ENCODE measurements at regions of chr2 and their contacts with region 1.

Region 1: GRCh38 chr2:72993147-72993932 is 76.0 kb downstream of the EMX1 start:
- DNase-seq: no peak
- ATAC-seq: peak in 1 of 2 donors; percentile 42
- H3K4me3 ChIP-seq: no peak overlapping the region
- H3K27ac ChIP-seq: no peak overlapping the region
- H3K4me1 ChIP-seq: no peaks in the 10 kb centered on the region
- H3K27me3 ChIP-seq: no peaks in the 10 kb centered on the region

Region 2: GRCh38 chr2:72951303-72952095 is 41.8 kb before region 1 on chr2:
- intact Hi-C with region 1: no loop called
- DNase-seq: no peak
- ATAC-seq: no peak
- H3K4me3 ChIP-seq: no peak overlapping the region
- H3K27ac ChIP-seq: no peak overlapping the region
- H3K4me1 ChIP-seq: no peaks in the 10 kb centered on the region
- H3K27me3 ChIP-seq: no peaks in the 10 kb centered on the region

Region 3: GRCh38 chr2:73103018-73103542 is 109.7 kb after region 1 on chr2:
- intact Hi-C with region 1: no loop called
- DNase-seq: peak in 1 of 3 donors; percentile 14
- ATAC-seq: no peak
- H3K4me3 ChIP-seq: no peak overlapping the region
- H3K27ac ChIP-seq: no peak overlapping the region
- H3K4me1 ChIP-seq: peaks cover 15% of the 10 kb centered on the region
- H3K27me3 ChIP-seq: no peaks in the 10 kb centered on the region

Region 4: DNA sequence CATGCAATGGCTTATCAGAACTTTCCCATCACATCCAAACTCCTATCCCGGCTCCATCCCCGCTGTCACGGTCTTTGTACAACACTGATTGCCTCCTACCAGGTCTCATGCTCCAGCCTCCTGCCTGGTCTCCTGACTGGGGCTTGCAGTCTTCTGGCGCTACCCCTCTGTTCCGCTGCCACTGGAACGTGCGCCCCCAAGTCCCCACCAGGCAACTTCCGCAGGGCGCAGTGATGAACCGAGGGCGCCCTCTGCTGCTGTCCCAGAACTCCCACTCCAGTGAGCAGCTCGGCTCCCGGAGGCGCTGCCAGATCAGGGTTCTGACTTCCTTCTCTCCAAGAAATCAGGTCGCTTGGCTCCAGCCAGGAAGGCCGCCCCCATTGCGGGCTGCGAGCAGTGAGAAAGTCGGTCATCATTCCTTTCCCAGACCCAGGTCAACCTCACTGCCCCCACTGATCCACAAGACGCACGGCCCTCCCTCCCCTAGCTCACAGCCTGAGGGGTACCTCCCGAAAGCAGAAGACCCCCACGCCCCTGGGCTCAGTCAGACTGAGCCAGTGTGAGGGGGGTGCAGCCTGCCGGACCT is 163.3 kb after region 1 on chr2:
- intact Hi-C with region 1: loop called (anchors 5 kb)
- DNase-seq: peak; percentile 74 to 87 (median 85)
- ATAC-seq: peak; percentile 82 to 93
- H3K4me3 ChIP-seq: no peak overlapping the region
- H3K27ac ChIP-seq: no peak overlapping the region
- H3K4me1 ChIP-seq: no peaks in the 10 kb centered on the region
- H3K27me3 ChIP-seq: no peaks in the 10 kb centered on the region

Region 5: GRCh38 chr2:73163483-73164367 is 170.4 kb after region 1 on chr2:
- intact Hi-C with region 1: loop called (anchors 5 kb)
- DNase-seq: peak; percentile 64 to 84 (median 71)
- ATAC-seq: peak; percentile 81 to 89
- H3K4me3 ChIP-seq: no peak overlapping the region
- H3K27ac ChIP-seq: no peak overlapping the region
- H3K4me1 ChIP-seq: no peaks in the 10 kb centered on the region
- H3K27me3 ChIP-seq: no peaks in the 10 kb centered on the region

Region 6: GRCh38 chr2:73176881-73177644 is 183.7 kb after region 1 on chr2:
- intact Hi-C with region 1: loop called in 1 of 4 experiments (anchors 5 kb)
- DNase-seq: peak; percentile 93 to 98 (median 96)
- ATAC-seq: peak; percentile 91 to 94
- H3K4me3 ChIP-seq: peak overlapping the region; percentile 65
- H3K27ac ChIP-seq: peak overlapping the region; percentile 13
- H3K4me1 ChIP-seq: peaks cover 2% of the 10 kb centered on the region
- H3K27me3 ChIP-seq: no peaks in the 10 kb centered on the region